ENCODE measurements at regions of chr17 and their contacts with region 1.

Region 1: GRCh38 chr17:64496786-64497564 is at the start of gene POLG2:
- DNase-seq: peak; percentile 83 to 92
- H3K4me3 ChIP-seq: peak within 1 kb of the TSS; percentile 83
- H3K27ac ChIP-seq: peak within 1 kb of the TSS; percentile 90
- H3K4me1 ChIP-seq: peaks cover 58% of the 10 kb centered on the region
- H3K27me3 ChIP-seq: no peaks in the 10 kb centered on the region
- CTCF ChIP-seq: peak; percentile 67
- total RNA-seq, gene POLG2: 23.3 and 32.7 TPM in 2 replicates

Region 2: DNA sequence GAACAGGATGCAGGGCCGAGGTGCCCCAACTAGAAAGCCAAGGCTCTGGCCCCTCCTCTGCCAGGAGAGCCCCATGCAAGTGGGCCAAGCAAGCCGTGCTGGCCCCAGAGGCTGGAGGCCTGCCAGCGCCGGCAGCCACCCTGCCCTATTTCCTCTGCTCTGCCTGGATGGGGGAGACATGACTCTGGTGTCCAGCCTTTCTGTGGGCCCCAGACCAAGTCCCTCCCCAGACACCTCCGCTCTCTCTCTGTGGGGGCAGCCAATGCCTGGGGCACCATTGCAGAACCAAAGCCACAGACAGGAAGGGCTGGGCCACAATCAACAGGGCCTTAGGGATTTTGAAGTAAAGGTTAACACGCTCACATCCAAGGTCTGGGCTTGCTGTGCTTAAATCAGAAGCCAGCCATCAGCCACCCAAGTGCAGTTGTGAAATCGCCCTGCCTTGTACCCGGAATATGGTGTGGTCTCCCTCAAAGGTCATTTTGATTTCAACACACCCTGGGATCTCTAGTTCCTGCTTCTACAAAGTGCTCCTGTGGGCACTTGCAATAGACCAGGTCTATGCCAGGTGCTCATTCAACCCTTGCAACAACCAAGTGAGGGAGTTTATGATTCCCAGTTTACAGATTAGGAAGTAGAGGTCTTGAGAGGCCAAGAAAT is 170.4 kb before region 1 on chr17:
- CTCF ChIA-PET with region 1: no interaction called
- POLR2A ChIA-PET with region 1: no interaction called
- intact Hi-C with region 1: loop called (anchors 5 kb)
- DNase-seq: peak; percentile 97 to 100
- H3K4me3 ChIP-seq: no peak overlapping the region
- H3K27ac ChIP-seq: peak overlapping the region; percentile 99
- H3K4me1 ChIP-seq: peaks cover 89% of the 10 kb centered on the region
- H3K27me3 ChIP-seq: no peaks in the 10 kb centered on the region
- CTCF ChIP-seq: no peak

Region 3: DNA sequence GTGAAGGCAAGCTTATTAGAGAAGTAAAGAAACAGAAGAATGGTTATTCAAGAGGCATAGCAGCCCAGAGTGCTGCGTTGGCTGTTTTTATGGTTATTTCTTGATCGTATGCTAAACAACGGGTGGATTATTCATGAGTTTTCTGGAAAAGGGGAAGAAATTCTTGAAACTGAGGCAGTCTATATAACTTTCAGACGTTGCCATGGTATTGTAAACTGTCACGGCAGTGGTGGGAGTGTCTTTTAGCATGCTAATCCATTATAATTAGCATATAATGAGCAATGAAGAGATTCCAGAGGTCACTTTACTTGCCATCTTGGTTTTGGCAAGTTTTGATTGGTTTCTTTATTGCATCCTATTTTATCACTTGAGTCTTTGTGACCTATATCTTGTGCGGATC is 65.4 kb before region 1 on chr17:
- CTCF ChIA-PET with region 1: no interaction called
- POLR2A ChIA-PET with region 1: no interaction called
- intact Hi-C with region 1: no loop called
- DNase-seq: no peak
- H3K4me3 ChIP-seq: no peak overlapping the region
- H3K27ac ChIP-seq: no peak overlapping the region
- H3K4me1 ChIP-seq: no peaks in the 10 kb centered on the region
- H3K27me3 ChIP-seq: no peaks in the 10 kb centered on the region
- CTCF ChIP-seq: no peak

Region 4: DNA sequence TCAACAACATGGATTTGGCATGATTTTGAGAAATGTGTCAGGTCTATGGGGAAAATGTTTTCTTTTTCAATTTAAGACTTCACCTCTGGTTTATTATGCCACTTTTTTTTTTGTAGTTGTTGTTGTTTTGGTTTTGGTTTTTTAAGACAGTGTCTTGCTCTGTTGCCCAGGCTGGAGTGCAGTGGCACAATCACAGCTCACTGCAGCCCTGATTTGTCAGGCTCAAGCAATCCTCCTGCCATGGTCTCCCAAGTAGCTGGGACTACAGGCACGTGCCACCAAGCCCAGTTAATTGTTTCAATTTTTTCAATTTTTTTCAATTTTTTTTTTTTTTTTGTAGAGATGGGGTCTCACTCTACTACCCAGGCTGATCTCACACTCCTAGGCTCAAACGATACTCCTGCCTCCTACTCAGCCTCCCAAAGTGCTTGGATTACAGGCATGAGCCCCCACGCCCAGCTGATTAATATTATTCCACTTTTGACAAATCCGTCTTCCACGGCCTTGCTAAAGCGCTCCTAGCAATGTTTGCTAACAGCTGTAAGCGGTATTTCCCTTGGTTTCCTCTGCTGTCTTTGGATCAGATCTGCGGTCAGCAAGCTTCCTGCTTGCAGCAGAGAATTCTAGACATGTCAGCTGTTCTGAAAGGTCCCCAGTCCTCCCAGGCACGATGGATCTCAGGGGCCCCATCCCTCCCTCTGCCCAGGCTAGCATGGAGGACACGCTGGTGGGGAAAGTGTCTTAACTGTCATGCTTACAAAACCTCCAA is 55.0 kb before region 1 on chr17:
- CTCF ChIA-PET with region 1: no interaction called
- POLR2A ChIA-PET with region 1: no interaction called
- intact Hi-C with region 1: loop called (anchors 1 kb)
- DNase-seq: peak; percentile 38 to 65
- H3K4me3 ChIP-seq: no peak overlapping the region
- H3K27ac ChIP-seq: peak overlapping the region; percentile 88
- H3K4me1 ChIP-seq: peaks cover 40% of the 10 kb centered on the region
- H3K27me3 ChIP-seq: no peaks in the 10 kb centered on the region
- CTCF ChIP-seq: no peak

Region 5: DNA sequence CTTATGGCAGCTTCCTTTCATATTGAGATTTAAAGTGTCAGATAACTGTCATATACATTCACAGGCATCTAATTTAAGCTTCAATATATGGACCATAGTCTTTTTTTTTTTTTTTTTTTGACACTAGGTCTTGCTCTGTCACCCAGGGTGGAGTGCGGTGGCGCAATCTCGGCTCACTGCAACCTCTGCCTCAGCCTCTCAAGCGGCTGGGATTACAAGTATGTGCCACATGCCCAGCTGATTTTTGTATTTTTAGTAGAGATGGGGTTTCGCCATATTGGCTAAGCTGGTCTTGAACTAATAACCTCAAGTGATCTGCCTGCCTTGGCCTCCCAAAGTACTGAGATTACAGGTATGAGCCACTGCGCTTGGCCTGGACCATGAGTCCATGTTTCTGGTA is 23.4 kb after region 1 on chr17:
- CTCF ChIA-PET with region 1: no interaction called
- POLR2A ChIA-PET with region 1: no interaction called
- intact Hi-C with region 1: no loop called
- DNase-seq: no peak
- H3K4me3 ChIP-seq: no peak overlapping the region
- H3K27ac ChIP-seq: no peak overlapping the region
- H3K4me1 ChIP-seq: no peaks in the 10 kb centered on the region
- H3K27me3 ChIP-seq: no peaks in the 10 kb centered on the region
- CTCF ChIP-seq: no peak

Region 6: DNA sequence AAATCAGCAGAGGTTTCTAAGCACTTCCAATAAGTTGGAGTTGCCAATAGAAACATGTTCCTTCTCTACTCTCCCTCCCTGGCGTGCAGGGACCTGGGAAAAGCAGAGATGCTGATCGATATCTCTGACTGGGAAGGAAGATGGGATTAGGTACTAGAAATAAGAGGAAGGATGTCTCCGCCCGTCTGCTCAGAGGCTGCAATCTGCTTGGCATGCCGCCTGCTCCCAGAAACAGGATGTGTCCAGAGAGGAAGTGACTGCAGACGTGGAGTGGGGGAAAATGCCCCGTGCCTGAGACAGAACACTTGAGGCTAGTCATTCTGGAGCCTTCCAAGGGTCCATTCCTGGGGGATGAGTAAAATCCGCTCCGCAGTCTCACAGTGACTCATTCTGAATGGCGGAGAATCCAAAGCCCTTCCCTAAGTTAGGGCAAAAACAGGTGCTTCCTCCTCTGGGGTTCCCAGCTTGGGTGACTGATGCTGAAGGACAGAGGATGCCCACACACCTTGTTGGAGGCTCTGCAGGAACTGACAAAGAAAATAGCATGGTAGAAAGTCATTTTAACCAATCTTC is 210.1 kb after region 1 on chr17:
- CTCF ChIA-PET with region 1: no interaction called
- POLR2A ChIA-PET with region 1: no interaction called
- intact Hi-C with region 1: no loop called
- DNase-seq: peak; percentile 91 to 99
- H3K4me3 ChIP-seq: peak overlapping the region; percentile 13; the same call in 1 of the 2 replicates
- H3K27ac ChIP-seq: peak overlapping the region; percentile 84
- H3K4me1 ChIP-seq: peaks cover 53% of the 10 kb centered on the region
- H3K27me3 ChIP-seq: no peaks in the 10 kb centered on the region
- CTCF ChIP-seq: no peak

Region 7: GRCh38 chr17:64742326-64742725 is 245.4 kb after region 1 on chr17:
- CTCF ChIA-PET with region 1: interaction called, 16 read pairs
- POLR2A ChIA-PET with region 1: no interaction called
- intact Hi-C with region 1: no loop called
- DNase-seq: no peak
- H3K4me3 ChIP-seq: no peak overlapping the region
- H3K27ac ChIP-seq: no peak overlapping the region
- H3K4me1 ChIP-seq: no peaks in the 10 kb centered on the region
- H3K27me3 ChIP-seq: no peaks in the 10 kb centered on the region
- CTCF ChIP-seq: no peak